ENCODE measurements at regions of chr7 and their contacts with region 1.

Region 1: GRCh38 chr7:73623798-73624668 is at the start of gene MLXIPL:
- DNase-seq: peak; percentile 51
- H3K4me3 ChIP-seq: peak within 1 kb of the TSS in 2 of 3 experiments; percentile 25 to 39
- H3K27ac ChIP-seq: no peak within 1 kb of the TSS
- H3K4me1 ChIP-seq: peaks cover 3% of the 10 kb centered on the region
- H3K27me3 ChIP-seq: peaks cover 28 to 39% of the 10 kb centered on the region in 2 experiments
- CTCF ChIP-seq: no peak
- POLR2A ChIP-seq: no peak
- total RNA-seq, gene MLXIPL: not detected in 2 replicates

Region 2: DNA sequence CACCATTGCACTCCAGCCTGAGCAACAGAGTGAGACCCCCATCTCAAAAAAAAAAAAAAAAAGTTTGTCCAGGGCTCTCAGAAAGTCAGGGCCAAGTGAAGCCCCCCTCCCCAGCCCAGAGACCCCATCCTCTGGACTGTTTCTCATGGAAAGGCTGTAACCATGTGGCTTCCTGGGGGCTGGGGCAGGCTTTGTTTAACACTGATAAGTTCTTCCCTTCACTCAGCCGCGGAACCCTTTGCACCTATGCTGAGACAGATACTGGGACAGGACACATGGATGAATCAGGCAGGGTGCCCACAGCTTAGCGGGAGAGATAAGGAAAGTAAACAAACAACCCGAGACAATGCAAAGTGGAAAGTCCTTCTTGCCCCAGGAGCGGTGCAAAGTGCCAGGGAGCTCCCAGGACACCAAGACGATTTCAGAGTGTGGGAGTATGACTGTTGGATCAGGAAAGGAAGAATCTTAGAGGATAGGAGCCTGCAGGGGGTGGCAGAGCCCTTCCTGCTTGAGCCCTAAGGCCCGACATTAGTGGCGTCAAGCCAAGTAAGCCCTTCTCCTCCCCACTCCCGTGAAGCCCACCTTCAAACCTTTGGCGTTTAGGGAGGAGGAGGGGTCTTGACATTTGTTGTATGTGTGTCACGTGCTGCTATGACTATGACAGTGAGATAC is 11.3 kb before region 1 on chr7:
- CTCF ChIA-PET with region 1: interaction called, 46 read pairs
- POLR2A ChIA-PET with region 1: interaction called, 5 read pairs
- dilution Hi-C with region 1: no loop called
- intact Hi-C with region 1: no loop called
- DNase-seq: peak; percentile 47
- H3K4me3 ChIP-seq: no peak overlapping the region
- H3K27ac ChIP-seq: no peak overlapping the region
- H3K4me1 ChIP-seq: peaks cover 4% of the 10 kb centered on the region
- H3K27me3 ChIP-seq: peaks cover 0 to 4% of the 10 kb centered on the region in 2 experiments
- CTCF ChIP-seq: no peak
- POLR2A ChIP-seq: no peak

Region 3: DNA sequence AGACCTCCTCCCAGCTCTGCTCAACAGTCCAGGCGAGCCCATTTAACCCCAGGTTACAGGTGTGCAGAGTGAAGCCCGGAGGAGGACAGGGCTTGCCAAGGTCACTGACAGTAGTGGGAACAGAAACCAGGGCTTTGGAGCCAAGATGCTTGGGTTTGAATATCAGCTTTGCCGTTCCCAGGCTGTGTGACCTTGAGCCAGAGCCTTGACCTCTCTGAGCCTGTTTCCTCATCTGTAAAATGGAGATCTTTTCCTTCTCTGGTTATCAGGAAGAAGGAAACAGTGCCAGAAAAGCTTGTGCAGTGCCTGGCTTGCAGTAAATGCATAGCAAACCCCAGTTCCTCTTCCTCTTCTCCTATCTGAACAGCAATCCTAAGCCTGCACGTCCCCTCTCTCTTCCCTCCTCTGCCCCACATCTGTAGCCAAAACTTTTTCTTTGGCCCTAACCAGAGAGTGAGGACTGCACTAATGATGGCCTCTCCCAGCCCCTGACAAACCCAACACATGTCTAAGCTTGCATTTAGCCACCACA is 21.7 kb after region 1 on chr7:
- CTCF ChIA-PET with region 1: interaction called, 11 read pairs
- POLR2A ChIA-PET with region 1: no interaction called
- dilution Hi-C with region 1: no loop called
- intact Hi-C with region 1: no loop called
- DNase-seq: no peak
- H3K4me3 ChIP-seq: no peak overlapping the region
- H3K27ac ChIP-seq: no peak overlapping the region
- H3K4me1 ChIP-seq: peaks cover 4% of the 10 kb centered on the region
- H3K27me3 ChIP-seq: peaks cover 38 to 48% of the 10 kb centered on the region in 2 experiments
- CTCF ChIP-seq: no peak
- POLR2A ChIP-seq: no peak

Region 4: DNA sequence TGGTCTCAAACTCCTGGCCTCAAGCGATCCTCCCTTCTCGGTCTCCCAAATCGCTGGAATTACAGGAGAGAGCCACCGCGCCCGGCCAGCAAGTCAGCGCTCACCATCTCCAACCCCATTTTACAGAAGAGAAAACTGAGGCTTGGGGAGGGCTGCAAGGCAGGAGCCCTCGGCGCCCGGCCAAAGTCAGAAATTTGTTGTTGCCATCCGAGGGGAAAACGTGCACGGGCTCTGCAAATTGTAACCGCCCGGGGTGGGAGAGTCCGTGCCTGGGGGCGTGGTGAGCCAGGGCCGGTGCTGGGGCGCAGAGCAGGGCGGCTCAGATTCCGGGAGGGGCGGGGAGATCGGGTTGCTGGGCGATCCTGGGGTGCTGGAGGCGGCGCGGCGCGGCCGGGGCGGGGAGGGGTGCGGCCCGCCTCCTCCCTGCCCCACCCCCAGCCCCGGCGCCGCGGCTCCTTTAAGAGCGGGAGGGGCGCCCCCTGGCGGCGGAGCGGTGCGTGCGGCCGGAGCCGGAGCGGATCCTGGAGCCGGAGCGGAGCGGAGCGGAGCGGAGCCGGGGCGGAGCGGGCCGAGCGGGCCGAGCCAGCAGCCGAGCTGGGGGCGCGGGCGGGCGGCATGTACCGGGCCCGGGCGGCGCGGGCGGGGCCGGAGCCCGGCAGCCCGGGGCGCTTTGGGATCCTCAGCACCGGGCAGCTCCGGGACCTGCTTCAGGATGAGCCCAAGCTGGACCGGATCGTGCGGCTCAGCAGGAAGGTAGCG is 43.5 kb after region 1 on chr7 and contains the start of gene VPS37D:
- CTCF ChIA-PET with region 1: interaction called, 22 read pairs
- POLR2A ChIA-PET with region 1: no interaction called
- dilution Hi-C with region 1: no loop called
- intact Hi-C with region 1: loop called (anchors 5 kb)
- DNase-seq: peak; percentile 74
- H3K4me3 ChIP-seq: peak within 1 kb of the TSS; percentile 35 to 67 (median 56)
- H3K27ac ChIP-seq: no peak within 1 kb of the TSS
- H3K4me1 ChIP-seq: peaks cover 3% of the 10 kb centered on the region
- H3K27me3 ChIP-seq: peaks cover 0 to 3% of the 10 kb centered on the region in 2 experiments
- CTCF ChIP-seq: peak; percentile 79 to 80
- POLR2A ChIP-seq: no peak
- total RNA-seq, gene VPS37D: 2.0 and 2.4 TPM in 2 replicates

Region 5: DNA sequence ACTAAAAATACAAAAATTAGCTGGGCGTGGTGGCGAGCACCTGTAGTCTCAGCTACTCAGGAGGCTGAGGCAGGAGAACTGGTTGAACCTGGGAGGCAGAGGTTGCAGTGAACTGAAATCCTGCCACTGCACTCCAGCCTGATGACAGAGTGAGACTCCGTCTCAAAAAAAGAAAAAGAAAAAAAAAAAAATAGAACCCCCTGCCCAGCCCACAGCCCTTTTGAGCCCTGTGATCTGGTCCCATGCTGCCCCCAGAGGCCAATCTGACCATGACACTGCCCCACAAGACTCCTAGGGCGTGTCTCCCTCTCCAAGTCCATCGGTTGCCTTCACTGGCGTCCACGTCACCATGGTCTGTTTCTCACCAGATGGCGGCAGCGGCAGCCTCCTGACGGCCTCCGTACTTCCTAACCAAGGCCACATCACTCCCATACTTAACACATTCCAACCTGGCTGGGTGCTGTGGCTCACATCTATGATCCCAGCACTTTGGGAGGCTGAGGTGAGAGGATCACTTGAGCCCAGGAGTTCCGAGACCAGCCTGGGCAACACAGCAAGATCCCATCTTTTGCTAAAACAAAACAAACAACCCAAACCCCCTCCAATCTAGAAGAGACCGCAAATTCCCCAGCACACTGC is 77.4 kb after region 1 on chr7:
- CTCF ChIA-PET with region 1: interaction called, 10 read pairs
- POLR2A ChIA-PET with region 1: no interaction called
- dilution Hi-C with region 1: no loop called
- intact Hi-C with region 1: no loop called
- DNase-seq: peak; percentile 46
- H3K4me3 ChIP-seq: no peak overlapping the region
- H3K27ac ChIP-seq: no peak overlapping the region
- H3K4me1 ChIP-seq: no peaks in the 10 kb centered on the region
- H3K27me3 ChIP-seq: no peaks in the 10 kb centered on the region
- CTCF ChIP-seq: peak; percentile 54 to 68
- POLR2A ChIP-seq: no peak

Region 6: DNA sequence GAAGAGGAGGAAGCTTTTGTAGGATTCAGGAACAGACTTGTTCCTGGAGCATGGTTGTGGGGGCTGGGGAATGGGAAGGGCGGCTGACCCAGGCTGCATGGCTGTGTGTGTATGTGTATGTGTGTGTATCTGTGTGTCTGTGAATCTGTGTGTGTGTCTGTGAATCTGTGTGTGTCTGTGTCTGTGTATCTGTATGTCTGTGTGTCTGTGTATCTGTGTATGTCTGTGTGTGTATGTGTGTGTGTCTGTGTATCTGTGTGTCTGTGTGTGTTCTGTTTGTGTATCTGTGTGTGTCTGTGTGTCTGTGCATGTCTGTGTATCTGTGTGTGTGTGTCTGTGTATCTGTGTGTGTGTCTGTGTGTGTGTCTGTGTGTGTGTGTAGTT is 102.0 kb after region 1 on chr7:
- CTCF ChIA-PET with region 1: interaction called, 50 read pairs
- POLR2A ChIA-PET with region 1: no interaction called
- dilution Hi-C with region 1: no loop called
- intact Hi-C with region 1: loop called (anchors 1 kb)
- DNase-seq: no peak
- H3K4me3 ChIP-seq: no peak overlapping the region
- H3K27ac ChIP-seq: no peak overlapping the region
- H3K4me1 ChIP-seq: peaks cover 5% of the 10 kb centered on the region
- H3K27me3 ChIP-seq: no peaks in the 10 kb centered on the region
- CTCF ChIP-seq: no peak
- POLR2A ChIP-seq: no peak

Measured in endothelial cell of umbilical vein (primary cell).